Left colon (tissue), 2 donors: ENCODE measurements at regions of chr12 and their contacts with region 1.

Region 1: DNA sequence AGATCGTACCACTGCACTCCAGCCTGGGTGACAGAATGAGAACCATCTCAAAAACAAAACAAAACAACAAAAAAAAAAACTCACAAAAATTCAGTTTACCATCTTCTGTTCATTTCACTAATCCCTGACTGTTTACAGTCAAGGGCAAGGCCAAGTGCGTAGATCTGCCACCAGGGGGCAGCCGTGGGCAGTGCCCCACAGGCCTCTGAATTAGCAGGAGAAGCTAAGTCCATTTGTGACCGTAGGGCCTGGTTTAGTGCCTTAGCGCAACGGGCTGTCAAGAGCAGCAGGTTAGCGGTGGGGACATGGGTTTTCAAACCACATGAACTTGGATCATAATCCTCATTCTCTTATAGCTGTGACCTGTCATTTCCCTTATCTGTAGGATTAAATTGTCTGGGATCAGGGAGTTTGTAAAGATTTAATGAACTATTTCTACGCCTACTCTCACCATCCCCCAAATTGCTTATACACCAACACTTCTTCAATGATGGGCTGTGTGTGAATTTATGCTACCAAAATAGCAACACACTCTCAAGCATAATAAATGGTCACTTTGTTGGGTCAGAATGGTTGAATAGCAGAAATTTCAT is 49.0 kb downstream of the KCTD10 start:
- DNase-seq: peak; percentile 72 to 84
- ATAC-seq: peak; percentile 92

Region 2: DNA sequence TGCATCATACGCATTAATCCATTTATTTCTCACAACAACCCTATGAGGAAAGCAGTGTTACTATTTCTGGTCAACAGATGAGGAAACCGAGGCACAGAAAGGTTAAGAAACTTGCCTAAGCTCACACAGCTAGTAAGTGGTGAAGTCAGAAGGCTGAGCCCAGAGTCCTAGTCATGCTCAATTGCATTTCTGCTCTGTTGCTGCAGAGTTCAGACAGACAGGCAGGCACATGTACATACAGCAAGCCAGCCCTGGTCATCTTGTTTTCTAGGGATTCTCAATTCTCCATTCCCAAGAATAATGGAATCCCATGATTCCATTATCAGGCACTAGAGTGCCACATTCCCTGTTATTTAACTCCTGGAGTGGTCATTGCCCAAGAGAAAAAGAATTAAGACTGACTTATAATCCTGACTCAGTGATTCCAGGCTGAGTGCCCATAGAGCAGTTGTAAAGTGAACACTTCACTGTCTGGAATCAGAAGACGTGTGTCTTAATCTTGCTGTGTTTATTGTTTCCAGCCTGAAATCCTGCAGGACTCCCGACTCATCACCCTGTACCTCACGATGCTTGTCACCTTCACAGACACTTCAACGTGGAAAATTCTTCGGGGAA is 60.0 kb after region 1 on chr12:
- intact Hi-C with region 1: loop called in 1 of 2 experiments (anchors 10 kb)
- DNase-seq: no peak
- ATAC-seq: no peak

Region 3: GRCh38 chr12:109518820-109519665 is 90.9 kb after region 1 on chr12:
- intact Hi-C with region 1: no loop called
- DNase-seq: peak in 1 of 2 donors; percentile 74
- ATAC-seq: peak; percentile 82